H1 (cell line): ENCODE measurements at regions of chr20 and their contacts with region 1.

Region 1: DNA sequence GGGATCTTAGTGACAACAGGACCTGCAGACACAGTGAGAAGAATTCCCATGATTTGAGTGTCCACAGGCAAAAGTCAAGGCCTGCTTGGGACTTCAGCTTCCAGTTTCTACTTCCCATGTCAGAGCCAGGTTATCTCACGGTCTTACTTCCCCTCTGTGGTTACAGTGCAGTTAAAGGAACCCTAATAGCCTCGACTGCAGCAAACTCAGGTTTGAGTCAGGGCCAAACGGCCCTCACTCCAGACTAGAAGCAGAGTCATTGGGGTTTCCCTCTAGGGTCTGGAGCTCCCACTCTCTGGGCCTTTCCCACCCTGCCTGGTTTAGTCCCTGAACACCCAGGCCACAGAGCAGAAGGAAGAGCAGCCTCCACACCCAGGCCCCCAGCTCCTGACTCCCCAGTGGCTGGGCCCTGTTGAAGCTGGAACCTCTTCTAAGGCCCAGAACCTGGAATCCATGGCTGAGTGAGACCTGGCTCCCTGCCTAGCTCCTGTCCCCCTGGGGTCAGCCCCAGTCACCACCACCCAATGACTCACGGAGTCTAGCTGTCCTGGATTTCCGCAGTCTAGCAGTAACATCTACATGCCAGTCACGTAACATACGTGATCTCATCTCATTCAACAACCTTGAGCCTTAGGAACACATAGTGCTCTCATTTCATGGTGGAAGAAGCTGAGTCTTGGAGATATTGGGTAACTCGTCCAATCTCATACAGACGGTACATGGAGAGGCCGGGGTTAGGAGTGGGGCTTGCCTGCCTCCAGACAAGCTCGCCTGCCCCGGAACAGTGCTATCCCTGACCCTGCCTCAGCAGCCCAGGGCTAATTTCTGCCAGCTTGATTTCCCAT is 9.2 kb upstream of the GHRH start:
- DNase-seq: no peak
- H3K4me3 ChIP-seq: no peak overlapping the region
- H3K27ac ChIP-seq: no peak overlapping the region
- H3K4me1 ChIP-seq: peaks cover 4 to 14% (median 11%) of the 10 kb centered on the region in 4 experiments
- H3K27me3 ChIP-seq: no peaks in the 10 kb centered on the region
- CTCF ChIP-seq: no peak
- EP300 ChIP-seq: no peak
- POLR2A ChIP-seq: no peak
- RAD21 ChIP-seq: no peak

Region 2: DNA sequence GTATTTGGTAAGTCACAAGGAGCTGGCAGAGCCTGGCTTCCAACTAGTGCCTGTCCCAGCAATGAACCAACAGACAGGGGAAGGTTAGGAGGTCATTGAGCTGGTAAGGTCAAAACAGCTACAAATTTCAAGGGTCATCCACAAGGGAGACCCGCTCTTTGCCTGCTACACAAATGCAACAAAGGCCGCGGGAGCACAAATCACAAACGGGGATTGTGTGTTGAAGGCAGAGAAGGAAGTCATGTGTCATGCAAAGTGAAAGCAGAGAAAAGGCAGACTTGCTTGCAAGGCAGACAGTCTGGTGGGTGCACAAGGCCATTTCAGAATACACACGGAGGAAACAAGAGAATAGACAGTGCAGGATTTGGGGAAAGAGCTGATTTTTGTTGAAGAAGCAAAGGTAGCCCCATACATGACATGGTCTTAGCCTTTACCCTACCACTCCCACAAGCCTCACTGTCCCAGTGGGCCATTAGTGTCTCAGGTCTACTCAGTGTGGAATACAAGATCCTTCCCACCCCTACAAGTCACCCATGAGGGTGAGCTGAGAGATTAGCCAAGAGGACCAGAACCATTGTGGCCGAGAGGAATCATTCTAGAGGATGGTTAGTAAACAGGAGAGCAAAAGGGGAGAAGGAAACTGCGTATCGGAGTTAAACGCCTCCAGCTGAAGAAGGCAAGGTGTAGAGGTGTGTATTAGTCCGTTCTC is 301.2 kb before region 1 on chr20:
- CTCF ChIA-PET with region 1: no interaction called
- POLR2A ChIA-PET with region 1: no interaction called
- DNase-seq: no peak
- H3K4me3 ChIP-seq: no peak overlapping the region
- H3K27ac ChIP-seq: no peak overlapping the region
- H3K4me1 ChIP-seq: no peaks in the 10 kb centered on the region
- H3K27me3 ChIP-seq: no peaks in the 10 kb centered on the region
- CTCF ChIP-seq: no peak
- EP300 ChIP-seq: no peak
- POLR2A ChIP-seq: no peak
- RAD21 ChIP-seq: no peak

Region 3: GRCh38 chr20:37161830-37162549 is 108.8 kb before region 1 on chr20:
- CTCF ChIA-PET with region 1: no interaction called
- POLR2A ChIA-PET with region 1: no interaction called
- DNase-seq: no peak
- H3K4me3 ChIP-seq: no peak overlapping the region
- H3K27ac ChIP-seq: no peak overlapping the region
- H3K4me1 ChIP-seq: no peaks in the 10 kb centered on the region
- H3K27me3 ChIP-seq: no peaks in the 10 kb centered on the region
- CTCF ChIP-seq: no peak
- EP300 ChIP-seq: no peak
- POLR2A ChIP-seq: no peak
- RAD21 ChIP-seq: no peak

Region 4: GRCh38 chr20:37257988-37258387 is 12.8 kb before region 1 on chr20:
- CTCF ChIA-PET with region 1: interaction called, 5 read pairs
- POLR2A ChIA-PET with region 1: interaction called, 11 read pairs
- DNase-seq: peak in 1 of 2 experiments; percentile 68
- H3K4me3 ChIP-seq: no peak overlapping the region
- H3K27ac ChIP-seq: no peak overlapping the region
- H3K4me1 ChIP-seq: peaks cover 0 to 15% (median 6%) of the 10 kb centered on the region in 4 experiments; a peak in 6 of 7 replicates
- H3K27me3 ChIP-seq: no peaks in the 10 kb centered on the region
- CTCF ChIP-seq: peak in 2 of 3 experiments; percentile 10 to 13; a peak in 1 of 4 replicates
- EP300 ChIP-seq: no peak
- POLR2A ChIP-seq: no peak
- RAD21 ChIP-seq: peak in 1 of 2 experiments; percentile 28; a peak in 1 of 4 replicates

Region 5: GRCh38 chr20:37315452-37316110 is 44.8 kb after region 1 on chr20:
- CTCF ChIA-PET with region 1: interaction called, 14 read pairs
- POLR2A ChIA-PET with region 1: interaction called, 3 read pairs
- DNase-seq: no peak
- H3K4me3 ChIP-seq: no peak overlapping the region
- H3K27ac ChIP-seq: no peak overlapping the region
- H3K4me1 ChIP-seq: peaks cover 2 to 9% (median 7%) of the 10 kb centered on the region in 4 experiments; a peak in 5 of 7 replicates
- H3K27me3 ChIP-seq: no peaks in the 10 kb centered on the region
- CTCF ChIP-seq: no peak
- EP300 ChIP-seq: no peak
- POLR2A ChIP-seq: no peak
- RAD21 ChIP-seq: no peak

Region 6: GRCh38 chr20:37384683-37385174 is 113.9 kb after region 1 on chr20:
- CTCF ChIA-PET with region 1: interaction called, 68 read pairs
- POLR2A ChIA-PET with region 1: interaction called, 8 read pairs
- DNase-seq: peak in 1 of 2 experiments; percentile 94
- H3K4me3 ChIP-seq: peak overlapping the region; percentile 22 to 63 (median 50); a peak in 7 of 8 replicates
- H3K27ac ChIP-seq: no peak overlapping the region
- H3K4me1 ChIP-seq: peaks cover 0 to 1% (median 0%) of the 10 kb centered on the region in 4 experiments; a peak in 2 of 7 replicates
- H3K27me3 ChIP-seq: no peaks in the 10 kb centered on the region
- CTCF ChIP-seq: peak; percentile 82 to 94 (median 91)
- EP300 ChIP-seq: no peak
- POLR2A ChIP-seq: no peak
- RAD21 ChIP-seq: peak; percentile 70 to 81

Region 7: GRCh38 chr20:37534401-37535157 is 263.8 kb after region 1 on chr20:
- CTCF ChIA-PET with region 1: interaction called, 21 read pairs
- POLR2A ChIA-PET with region 1: interaction called, 3 read pairs
- DNase-seq: peak in 1 of 2 experiments; percentile 70
- H3K4me3 ChIP-seq: no peak overlapping the region
- H3K27ac ChIP-seq: no peak overlapping the region
- H3K4me1 ChIP-seq: no peaks in the 10 kb centered on the region
- H3K27me3 ChIP-seq: no peaks in the 10 kb centered on the region
- CTCF ChIP-seq: peak in 2 of 3 experiments; percentile 78 to 90; a peak in 3 of 4 replicates
- EP300 ChIP-seq: no peak
- POLR2A ChIP-seq: no peak
- RAD21 ChIP-seq: peak; percentile 97 to 98